ENCODE measurements at regions of chr5 and their contacts with region 1.

Region 1: DNA sequence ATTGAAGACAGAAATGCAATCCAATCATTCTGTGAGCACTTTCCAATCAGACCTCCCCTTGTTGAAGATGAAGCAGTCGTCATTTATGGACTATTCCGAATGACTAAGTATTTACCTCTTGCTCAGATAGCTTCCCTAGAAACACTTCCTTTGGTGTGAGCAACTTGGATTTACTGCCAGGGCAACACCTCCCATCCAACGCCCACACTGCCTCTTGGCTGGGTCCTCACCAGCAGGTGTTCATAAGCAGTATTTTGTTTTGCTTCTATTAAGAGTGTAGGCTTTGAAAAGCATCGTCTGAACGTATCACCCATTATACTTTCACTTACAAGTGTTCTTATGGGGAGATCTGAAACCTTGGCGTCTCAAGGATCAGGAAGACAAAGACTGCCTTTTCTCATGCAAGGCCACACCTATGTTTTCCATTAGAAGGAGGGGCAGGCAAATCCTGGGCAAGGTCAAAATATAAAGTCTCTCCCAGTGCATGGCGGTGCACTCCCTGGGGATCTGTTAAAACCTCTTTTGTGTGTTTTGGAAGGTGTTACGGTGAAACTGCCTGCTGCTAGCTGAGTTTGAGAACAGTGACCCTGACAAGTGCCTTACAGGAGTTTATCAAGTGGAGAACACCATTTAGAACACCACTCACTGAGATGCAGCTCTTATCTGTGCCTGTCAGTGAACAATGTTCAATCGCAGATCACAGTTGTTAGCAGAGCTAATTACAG is 10.6 kb upstream of the MARCHF3 start:
- DNase-seq: no peak
- ATAC-seq: peak; percentile 13 to 79 (median 68)
- H3K4me3 ChIP-seq: peak overlapping the region in 2 of 10 donors; percentile 1 to 6
- H3K27ac ChIP-seq: peak overlapping the region in 8 of 10 donors; percentile 1 to 63 (median 36)
- H3K4me1 ChIP-seq: peaks cover 3 to 39% (median 26%) of the 10 kb centered on the region in 9 donors
- H3K27me3 ChIP-seq: no peaks in the 10 kb centered on the region
- CTCF ChIP-seq: no peak

Region 2: DNA sequence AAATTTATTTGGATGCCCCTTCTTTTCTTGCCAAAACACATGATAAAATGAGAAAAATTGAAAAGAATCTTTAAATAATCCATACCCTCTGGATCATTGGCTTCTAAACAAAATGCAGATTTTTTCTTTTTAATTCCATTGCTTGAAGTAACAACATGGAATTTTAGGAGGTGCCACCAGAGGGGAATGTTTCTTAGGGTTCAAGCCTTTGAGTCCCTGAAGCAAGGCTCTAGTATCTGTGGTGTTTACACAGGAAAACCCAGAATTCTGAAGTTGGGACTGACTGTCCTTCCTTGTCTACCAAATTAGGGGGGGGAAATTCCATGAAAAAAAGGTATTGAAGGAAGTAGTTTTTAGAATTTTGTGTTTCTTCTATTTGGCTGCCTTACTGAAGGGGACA is 194.6 kb before region 1 on chr5:
- intact Hi-C with region 1: loop called in 5 of 10 experiments (anchors 5 to 10 kb)
- DNase-seq: no peak
- ATAC-seq: peak in 2 of 8 donors; percentile 41 to 48
- H3K4me3 ChIP-seq: no peak overlapping the region
- H3K27ac ChIP-seq: peak overlapping the region in 3 of 10 donors; percentile 14 to 70 (median 59)
- H3K4me1 ChIP-seq: peaks cover 2 to 57% (median 39%) of the 10 kb centered on the region in 9 donors
- H3K27me3 ChIP-seq: no peaks in the 10 kb centered on the region
- CTCF ChIP-seq: peak in 4 of 9 donors; percentile 20 to 31 (median 28)

Region 3: GRCh38 chr5:126852091-126852571 is 188.8 kb before region 1 on chr5:
- intact Hi-C with region 1: loop called in 5 of 10 experiments (anchors 5 to 10 kb)
- DNase-seq: no peak
- ATAC-seq: peak; percentile 40 to 66 (median 56)
- H3K4me3 ChIP-seq: peak overlapping the region in 1 of 10 donors; percentile 24
- H3K27ac ChIP-seq: peak overlapping the region in 9 of 10 donors; percentile 16 to 81 (median 64)
- H3K4me1 ChIP-seq: peaks cover 0 to 60% (median 36%) of the 10 kb centered on the region in 9 donors
- H3K27me3 ChIP-seq: no peaks in the 10 kb centered on the region
- CTCF ChIP-seq: no peak

Region 4: DNA sequence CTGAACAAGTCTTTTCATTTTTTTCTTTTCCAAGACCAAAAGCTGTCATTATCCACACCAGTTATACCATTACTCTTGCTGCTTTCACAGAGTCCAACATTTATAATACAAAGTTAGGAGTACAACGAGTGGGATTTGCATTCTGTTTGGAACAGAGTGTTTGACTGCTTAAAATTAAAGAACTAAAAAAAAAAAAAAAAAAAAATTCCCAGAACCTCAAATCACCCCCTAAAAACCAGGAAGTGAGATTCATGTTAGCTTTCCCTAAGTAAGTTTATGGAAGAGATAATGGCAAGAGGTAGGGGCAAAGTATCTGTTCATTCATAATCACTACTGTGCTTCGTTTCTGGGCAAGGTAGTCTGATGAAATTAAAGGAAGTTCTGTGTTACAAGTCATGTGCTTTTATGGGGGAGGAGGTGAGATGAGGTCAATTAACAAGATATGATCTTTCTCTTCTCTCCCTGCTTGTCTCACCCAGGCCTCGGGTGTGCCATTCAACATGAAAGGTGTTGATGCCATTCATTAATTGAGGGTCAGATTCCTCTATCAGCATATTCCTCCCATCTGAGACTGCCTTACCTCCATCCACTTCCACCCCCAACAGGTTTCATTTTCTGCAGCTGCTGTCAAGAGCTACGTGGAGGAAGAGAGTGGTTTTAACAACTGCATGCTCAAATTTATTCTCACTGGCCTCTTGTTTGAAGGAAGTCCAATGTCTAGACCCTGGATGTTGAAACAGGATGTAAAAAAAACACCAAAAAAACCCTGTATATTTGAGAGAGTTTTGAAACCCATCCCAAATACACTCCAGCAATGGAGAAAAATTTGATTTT is 68.7 kb before region 1 on chr5:
- intact Hi-C with region 1: no loop called
- DNase-seq: no peak
- ATAC-seq: peak in 1 of 8 donors; percentile 17
- H3K4me3 ChIP-seq: no peak overlapping the region
- H3K27ac ChIP-seq: peak overlapping the region in 8 of 10 donors; percentile 27 to 83 (median 66)
- H3K4me1 ChIP-seq: peaks cover 11 to 58% (median 47%) of the 10 kb centered on the region in 9 donors
- H3K27me3 ChIP-seq: no peaks in the 10 kb centered on the region
- CTCF ChIP-seq: no peak

Region 5: DNA sequence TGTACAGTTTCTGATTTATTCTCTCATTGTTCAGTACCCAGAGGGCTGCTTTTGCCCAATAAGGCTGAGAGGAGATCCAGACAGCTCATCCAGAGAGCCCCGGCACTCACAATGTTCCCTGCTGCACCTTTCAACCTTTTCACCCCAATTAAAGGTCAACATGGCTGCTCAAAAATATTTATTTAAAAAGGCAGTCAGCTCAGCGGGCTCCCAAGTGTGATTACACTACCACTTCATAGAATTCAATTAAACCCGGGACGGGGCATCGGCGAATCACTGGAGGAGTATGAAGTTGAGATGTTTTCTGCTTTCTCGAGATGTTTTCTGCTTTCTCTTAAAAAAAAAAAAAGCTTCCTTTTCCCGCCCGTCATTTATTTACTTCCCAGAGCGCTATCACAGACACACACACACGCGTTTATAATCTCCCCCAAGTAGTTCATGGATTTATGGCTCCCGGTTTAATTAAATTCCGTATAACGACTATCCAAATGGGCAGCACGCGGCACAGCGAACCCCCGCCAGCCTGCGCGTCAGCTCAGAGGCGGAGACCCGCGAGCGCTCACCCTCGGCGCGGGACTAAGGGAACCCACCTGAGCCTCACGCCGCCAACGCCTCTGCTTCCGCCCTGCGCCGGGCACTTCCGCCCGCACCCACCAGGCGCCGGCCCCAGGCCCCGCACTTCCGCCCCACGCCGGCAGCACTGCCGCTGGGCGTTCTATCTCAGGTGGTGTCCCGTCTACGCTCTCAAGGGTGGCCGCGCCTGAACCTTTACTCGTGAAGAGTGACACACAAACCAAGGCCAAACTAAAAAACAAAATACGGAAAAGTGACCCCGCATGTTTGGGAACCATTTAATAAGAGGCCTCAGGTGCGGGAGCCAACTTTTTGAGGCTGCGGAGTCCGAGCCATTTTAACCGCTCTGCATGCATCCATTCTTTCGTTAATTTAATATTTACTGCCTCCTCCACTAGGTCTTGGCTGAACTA is 32.2 kb after region 1 on chr5 and contains the start of gene C5orf63:
- intact Hi-C with region 1: no loop called
- DNase-seq: peak; percentile 45 to 71
- ATAC-seq: peak; percentile 84 to 95 (median 91)
- H3K4me3 ChIP-seq: peak within 1 kb of the TSS; percentile 23 to 67 (median 62)
- H3K27ac ChIP-seq: peak within 1 kb of the TSS in 9 of 10 donors; percentile 52 to 74 (median 61)
- H3K4me1 ChIP-seq: peaks cover 0 to 48% (median 18%) of the 10 kb centered on the region in 9 donors
- H3K27me3 ChIP-seq: no peaks in the 10 kb centered on the region
- CTCF ChIP-seq: peak in 6 of 9 donors; percentile 12 to 33 (median 27)
- total RNA-seq, gene C5orf63: 9.7 to 18.3 (median 12.9) TPM

Region 6: DNA sequence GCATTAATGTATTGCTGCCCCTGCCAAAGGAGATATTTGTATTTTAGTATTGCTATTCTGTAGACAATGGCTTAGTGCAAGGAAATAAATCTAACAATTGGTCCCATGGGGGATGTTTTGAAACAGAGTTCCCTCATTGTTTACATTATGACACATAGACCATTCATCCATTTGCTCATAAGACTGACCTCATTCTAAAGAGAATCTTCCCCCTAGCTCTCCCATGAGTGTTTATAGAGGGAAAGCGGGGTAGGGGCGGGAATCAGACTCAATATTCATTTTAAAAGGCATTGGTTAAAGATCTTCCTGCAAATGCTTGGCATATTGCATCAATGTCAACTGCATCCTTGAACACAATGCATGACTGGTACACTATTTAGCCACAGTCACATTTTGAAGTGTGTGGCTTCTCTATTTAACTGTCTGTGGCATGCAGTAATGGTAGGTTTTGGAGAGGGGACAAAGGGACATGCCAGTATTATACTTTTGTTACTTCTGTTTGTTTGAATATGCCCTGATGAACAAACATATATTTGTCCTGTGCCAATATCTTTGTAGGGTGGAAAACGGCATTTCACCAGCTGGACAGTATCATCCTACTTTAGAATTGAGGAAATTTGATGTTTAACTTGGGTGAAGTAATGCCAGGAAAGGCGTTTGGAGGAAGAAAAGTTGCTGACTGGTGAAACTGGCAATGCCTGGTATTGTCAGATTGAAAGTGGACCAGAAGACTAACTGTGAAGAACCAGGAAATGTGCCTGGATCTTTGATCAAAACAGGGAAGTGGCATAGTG is 165.6 kb after region 1 on chr5:
- intact Hi-C with region 1: no loop called
- DNase-seq: no peak
- ATAC-seq: no peak
- H3K4me3 ChIP-seq: no peak overlapping the region
- H3K27ac ChIP-seq: no peak overlapping the region
- H3K4me1 ChIP-seq: no peaks in the 10 kb centered on the region
- H3K27me3 ChIP-seq: no peaks in the 10 kb centered on the region
- CTCF ChIP-seq: no peak